Panc1 (cell line): ENCODE measurements at regions of chr1 and their contacts with region 1.

Region 1: DNA sequence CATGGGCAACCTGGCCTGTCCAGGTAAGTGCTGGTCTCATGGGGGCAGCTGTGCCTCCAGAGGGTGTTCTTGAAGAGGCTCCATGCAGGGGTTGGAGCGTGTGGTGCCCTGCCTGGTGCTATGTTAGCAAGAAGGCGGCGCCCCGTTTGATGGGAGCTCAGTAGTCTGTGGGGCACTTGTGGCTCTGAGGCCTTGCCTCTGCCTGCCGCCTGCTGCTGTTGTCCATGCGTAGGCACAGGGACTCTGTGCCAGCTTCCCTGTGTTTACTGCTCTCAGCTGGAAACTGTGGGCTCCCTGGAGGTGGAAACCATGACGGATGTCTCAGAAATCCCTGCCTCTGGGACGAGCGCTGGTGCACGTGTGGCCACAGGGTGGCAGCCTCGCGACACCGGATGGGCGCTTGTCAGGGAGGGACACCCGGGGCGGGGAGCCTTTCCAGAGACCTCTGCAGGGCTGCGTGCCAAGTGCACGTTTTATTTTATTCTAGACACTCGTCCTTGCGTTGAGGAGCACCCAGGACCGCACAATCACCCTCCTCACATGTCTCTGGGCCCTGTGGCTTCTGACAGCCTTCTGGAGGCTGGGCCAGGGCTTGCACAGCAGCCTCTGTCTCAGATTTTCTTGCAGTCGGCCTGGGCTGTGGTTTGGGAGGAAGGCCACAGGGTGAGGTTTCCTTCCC is 27.1 kb downstream of the SNAP47 start:
- DNase-seq: no peak
- ATAC-seq: peak; percentile 75
- H3K4me3 ChIP-seq: no peak overlapping the region
- H3K27ac ChIP-seq: peak overlapping the region; percentile 46
- H3K4me1 ChIP-seq: peaks cover 78% of the 10 kb centered on the region
- H3K27me3 ChIP-seq: no peaks in the 10 kb centered on the region
- CTCF ChIP-seq: peak; percentile 95

Region 2: DNA sequence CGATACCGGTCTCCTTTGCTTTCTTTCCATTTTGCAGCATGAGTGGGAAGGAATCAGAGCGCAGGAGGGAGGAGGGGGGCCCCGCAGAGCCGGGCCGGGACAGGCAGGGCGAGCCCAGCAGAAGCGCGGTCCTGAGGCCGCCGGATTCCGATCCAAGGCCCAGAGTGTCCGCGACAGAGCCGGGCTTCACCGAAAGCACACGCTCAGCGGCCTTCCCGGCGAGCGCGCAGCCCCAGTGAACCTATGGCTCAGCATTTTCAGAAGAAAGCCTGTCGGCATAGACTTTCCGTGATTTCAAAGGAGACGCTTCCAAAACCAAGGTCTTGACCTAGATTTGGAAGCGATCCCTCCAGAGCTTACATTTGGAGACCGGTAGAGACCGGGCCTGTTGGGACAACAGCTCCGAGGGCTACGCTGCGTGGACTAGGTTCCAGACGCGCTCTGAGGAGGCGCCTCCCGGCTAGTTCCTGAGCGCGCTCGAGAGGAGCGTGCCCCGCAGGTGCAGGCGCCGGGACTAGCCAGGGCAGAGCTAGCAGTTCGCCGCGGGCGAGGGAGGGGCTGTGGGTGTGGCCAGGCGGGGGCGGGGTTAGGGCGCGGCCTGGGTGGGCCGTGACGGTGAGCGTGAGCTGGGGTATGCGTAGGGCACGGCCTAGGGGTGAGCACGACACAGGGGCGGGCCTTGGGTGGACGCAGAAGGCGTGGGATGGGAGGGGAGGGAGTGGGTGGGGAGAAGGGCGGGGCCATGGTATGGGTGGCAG is 25.3 kb after region 1 on chr1:
- CTCF ChIA-PET with region 1: interaction called, 17 read pairs
- POLR2A ChIA-PET with region 1: no interaction called
- in situ Hi-C with region 1: no loop called
- intact Hi-C with region 1: no loop called
- DNase-seq: peak; percentile 51
- ATAC-seq: peak; percentile 92
- H3K4me3 ChIP-seq: peak overlapping the region; percentile 67 to 82
- H3K27ac ChIP-seq: peak overlapping the region; percentile 79
- H3K4me1 ChIP-seq: peaks cover 22% of the 10 kb centered on the region
- H3K27me3 ChIP-seq: no peaks in the 10 kb centered on the region
- CTCF ChIP-seq: no peak

Region 3: GRCh38 chr1:227864882-227865281 is 102.5 kb after region 1 on chr1:
- CTCF ChIA-PET with region 1: interaction called, 10 read pairs
- POLR2A ChIA-PET with region 1: no interaction called
- in situ Hi-C with region 1: no loop called
- intact Hi-C with region 1: no loop called
- DNase-seq: no peak
- ATAC-seq: no peak
- H3K4me3 ChIP-seq: no peak overlapping the region
- H3K27ac ChIP-seq: no peak overlapping the region
- H3K4me1 ChIP-seq: no peaks in the 10 kb centered on the region
- H3K27me3 ChIP-seq: peaks cover 2% of the 10 kb centered on the region; the same call in 1 of the 2 replicates
- CTCF ChIP-seq: no peak

Region 4: GRCh38 chr1:227946624-227947385 is 184.4 kb after region 1 on chr1:
- CTCF ChIA-PET with region 1: interaction called, 4 read pairs
- POLR2A ChIA-PET with region 1: interaction called, 4 read pairs
- in situ Hi-C with region 1: no loop called
- intact Hi-C with region 1: loop called (anchors 2 kb)
- DNase-seq: no peak
- ATAC-seq: peak; percentile 81
- H3K4me3 ChIP-seq: peak overlapping the region; percentile 71 to 91
- H3K27ac ChIP-seq: peak overlapping the region; percentile 90
- H3K4me1 ChIP-seq: peaks cover 40% of the 10 kb centered on the region
- H3K27me3 ChIP-seq: no peaks in the 10 kb centered on the region
- CTCF ChIP-seq: peak; percentile 94